PC-9 (cell line): ENCODE measurements at regions of chr11 and their contacts with region 1.

Region 1: GRCh38 chr11:81888391-81888790 is 845.3 kb downstream of the FAM181B start:
- DNase-seq: no peak
- H3K4me3 ChIP-seq: no peak overlapping the region
- H3K27ac ChIP-seq: no peak overlapping the region
- H3K4me1 ChIP-seq: no peaks in the 10 kb centered on the region
- H3K27me3 ChIP-seq: no peaks in the 10 kb centered on the region
- CTCF ChIP-seq: no peak

Region 2: DNA sequence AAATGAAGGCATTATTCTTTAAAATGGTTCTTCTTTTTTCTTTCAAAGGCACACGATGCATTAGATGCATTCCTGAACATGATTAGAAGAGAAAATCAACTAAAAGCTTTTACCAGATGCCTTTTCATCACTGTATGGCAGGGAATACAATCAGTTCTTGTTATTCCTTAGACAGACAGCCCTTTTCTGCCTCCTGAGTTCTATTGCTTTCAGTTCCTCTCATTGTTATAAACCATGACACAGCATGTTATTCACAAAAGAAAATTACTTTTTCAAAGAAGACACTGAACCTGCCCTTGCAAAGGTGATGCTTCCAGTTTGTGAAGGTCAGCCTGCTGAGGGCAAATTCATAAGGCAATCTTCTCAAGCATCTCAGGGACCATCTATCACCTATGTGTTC is 775.1 kb after region 1 on chr11:
- CTCF ChIA-PET with region 1: no interaction called
- POLR2A ChIA-PET with region 1: interaction called, 10 read pairs
- intact Hi-C with region 1: no loop called
- DNase-seq: no peak
- H3K4me3 ChIP-seq: no peak overlapping the region
- H3K27ac ChIP-seq: no peak overlapping the region
- H3K4me1 ChIP-seq: no peaks in the 10 kb centered on the region
- H3K27me3 ChIP-seq: no peaks in the 10 kb centered on the region
- CTCF ChIP-seq: no peak